Cardiac septum (tissue), 1 donor: ENCODE measurements at regions of chr17 and their contacts with region 1.

Region 1: GRCh38 chr17:76137351-76138233 is 3.5 kb downstream of the FOXJ1 start:
- DNase-seq: no peak

Region 2: DNA sequence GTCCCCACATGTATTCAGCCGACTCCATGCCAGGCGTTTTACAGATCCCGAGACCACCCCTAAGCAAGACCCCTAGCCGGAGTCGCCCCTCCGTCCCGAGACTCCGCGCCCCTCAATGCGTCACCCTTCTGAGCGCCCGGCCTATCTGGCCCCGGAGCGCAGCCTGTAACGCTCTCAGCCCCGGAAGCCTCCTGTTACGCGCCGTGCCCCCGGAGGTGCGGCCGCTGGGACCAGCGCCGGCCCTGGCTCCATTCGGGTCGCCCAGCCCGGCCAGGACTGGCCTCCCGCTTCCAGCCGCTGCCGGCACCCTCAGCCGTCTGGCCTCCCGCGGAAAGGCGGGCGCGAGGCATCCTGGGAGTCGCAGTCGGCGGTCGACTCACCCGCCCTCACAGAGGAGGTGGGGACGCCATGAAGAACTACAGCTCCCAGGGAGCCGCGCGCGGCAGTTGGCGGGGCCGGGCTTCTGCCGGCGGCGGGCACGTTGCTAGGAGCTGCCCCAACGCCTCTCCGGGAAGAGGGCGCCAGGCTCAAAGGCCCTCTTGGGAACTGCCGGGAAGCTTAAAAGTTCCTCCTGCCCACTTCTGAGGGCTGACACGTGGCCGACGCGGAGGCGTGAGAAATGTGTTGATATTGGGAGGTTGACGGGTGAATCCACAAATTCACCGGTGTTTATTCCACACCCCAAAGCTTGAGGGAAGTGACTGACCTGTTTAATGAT is 196.7 kb before region 1 on chr17 and contains the start of gene FBF1:
- intact Hi-C with region 1: no loop called
- DNase-seq: peak; percentile 97
- total RNA-seq, gene FBF1: 5.2 TPM

Region 3: GRCh38 chr17:75950821-75951554 is 186.6 kb before region 1 on chr17:
- intact Hi-C with region 1: no loop called
- DNase-seq: no peak

Region 4: DNA sequence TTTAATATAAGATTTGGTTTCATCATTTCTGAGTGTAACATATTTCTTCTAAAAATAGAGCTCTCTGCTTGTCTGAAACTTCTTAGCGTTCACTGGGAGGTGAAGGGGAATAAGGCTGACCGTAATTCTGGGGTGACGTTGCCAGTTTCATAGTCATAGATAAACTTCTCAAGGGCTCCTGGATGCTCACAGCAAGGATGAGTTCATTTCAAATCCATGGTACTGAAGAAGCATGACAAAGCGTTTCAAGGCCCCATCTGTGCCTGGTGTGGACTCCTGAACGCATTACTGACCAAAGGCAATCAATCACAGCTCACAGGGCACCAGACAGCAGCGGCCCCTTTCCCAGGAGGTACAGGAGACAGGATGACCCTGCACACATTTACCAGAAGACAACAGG is 98.5 kb before region 1 on chr17:
- intact Hi-C with region 1: no loop called
- DNase-seq: no peak

Region 5: DNA sequence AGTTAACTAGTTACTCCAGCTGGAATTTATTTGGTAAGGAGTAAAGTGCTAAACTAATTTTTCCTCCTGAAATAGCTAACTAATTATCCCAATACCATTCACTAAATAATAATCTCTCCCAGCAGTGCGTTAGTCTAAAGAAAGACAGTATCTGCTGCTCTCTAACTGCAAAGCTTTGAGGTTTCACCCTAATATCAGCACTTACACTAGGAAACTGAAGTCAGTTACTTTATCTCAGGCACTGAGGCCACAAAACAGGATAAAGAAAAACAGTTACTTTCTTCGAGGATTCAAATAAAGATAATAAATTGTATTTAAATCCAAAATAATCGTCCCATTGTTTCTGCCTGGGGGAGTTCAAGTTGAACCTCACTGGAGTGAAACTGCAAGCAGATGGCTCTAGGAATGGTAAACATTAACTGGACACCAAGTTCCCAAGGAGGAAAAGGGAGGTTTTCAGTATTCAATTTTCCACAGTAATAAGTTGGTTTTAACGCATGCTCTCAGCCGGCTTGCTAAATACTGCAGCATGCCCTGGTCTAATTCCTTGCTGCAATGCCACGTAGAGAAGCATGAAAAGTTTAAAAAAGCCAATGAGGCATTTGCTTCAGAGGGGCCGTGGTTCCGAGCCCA is 23.4 kb after region 1 on chr17:
- intact Hi-C with region 1: loop called (anchors 2 kb)
- DNase-seq: no peak

Region 6: GRCh38 chr17:76304226-76305134 is 166.9 kb after region 1 on chr17:
- intact Hi-C with region 1: no loop called
- DNase-seq: no peak